ENCODE measurements at regions of chr7 and their contacts with region 1.

Region 1: GRCh38 chr7:33109005-33109757 is at the start of gene RP9:
- DNase-seq: peak; percentile 65 to 85 (median 77)
- ATAC-seq: peak; percentile 96
- H3K4me3 ChIP-seq: peak within 1 kb of the TSS; percentile 83
- H3K4me3 Mint-ChIP-seq: peak within 1 kb of the TSS; percentile 83 to 96 (median 90)
- H3K27ac ChIP-seq: peak within 1 kb of the TSS; percentile 86
- H3K27ac Mint-ChIP-seq: peak within 1 kb of the TSS; percentile 25 to 95 (median 77)
- H3K4me1 ChIP-seq: peaks cover 21 to 23% of the 10 kb centered on the region in 2 donors
- H3K4me1 Mint-ChIP-seq: peaks cover 25 to 52% (median 45%) of the 10 kb centered on the region in 7 donors
- H3K27me3 ChIP-seq: no peaks in the 10 kb centered on the region
- H3K27me3 Mint-ChIP-seq: peaks cover 5 to 32% (median 16%) of the 10 kb centered on the region in 5 donors
- total RNA-seq, gene RP9: 12.7 to 23.3 (median 14.7) TPM

Region 2: DNA sequence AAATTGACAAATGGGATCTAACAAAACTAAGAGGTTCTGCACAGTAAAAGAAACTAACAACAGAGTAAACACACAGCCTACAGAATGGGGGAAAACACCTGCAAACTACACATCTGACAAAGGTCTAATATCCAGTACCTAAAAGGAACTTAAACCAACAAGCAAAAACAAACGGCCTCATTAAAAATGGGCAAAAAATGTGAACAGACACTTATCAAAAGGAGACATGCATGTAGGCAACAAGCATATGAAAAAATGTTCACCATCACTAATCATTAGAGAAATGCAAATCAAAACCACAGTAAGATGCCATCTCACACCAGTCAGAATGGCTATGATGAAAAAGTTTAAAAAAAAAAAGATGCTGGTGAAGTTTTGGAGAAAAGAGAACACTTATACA is 415.0 kb before region 1 on chr7:
- CTCF ChIA-PET with region 1: no interaction called
- POLR2A ChIA-PET with region 1: no interaction called
- intact Hi-C with region 1: loop called in 1 of 2 experiments (anchors 5 kb)
- DNase-seq: no peak
- ATAC-seq: no peak
- H3K4me3 ChIP-seq: no peak overlapping the region
- H3K4me3 Mint-ChIP-seq: no peak overlapping the region
- H3K27ac ChIP-seq: no peak overlapping the region
- H3K27ac Mint-ChIP-seq: no peak overlapping the region
- H3K4me1 ChIP-seq: no peaks in the 10 kb centered on the region
- H3K4me1 Mint-ChIP-seq: peaks cover under 1 to 11% (median 6%) of the 10 kb centered on the region in 7 donors
- H3K27me3 ChIP-seq: no peaks in the 10 kb centered on the region
- H3K27me3 Mint-ChIP-seq: peaks cover 0 to 10% (median 0%) of the 10 kb centered on the region in 5 donors

Region 3: DNA sequence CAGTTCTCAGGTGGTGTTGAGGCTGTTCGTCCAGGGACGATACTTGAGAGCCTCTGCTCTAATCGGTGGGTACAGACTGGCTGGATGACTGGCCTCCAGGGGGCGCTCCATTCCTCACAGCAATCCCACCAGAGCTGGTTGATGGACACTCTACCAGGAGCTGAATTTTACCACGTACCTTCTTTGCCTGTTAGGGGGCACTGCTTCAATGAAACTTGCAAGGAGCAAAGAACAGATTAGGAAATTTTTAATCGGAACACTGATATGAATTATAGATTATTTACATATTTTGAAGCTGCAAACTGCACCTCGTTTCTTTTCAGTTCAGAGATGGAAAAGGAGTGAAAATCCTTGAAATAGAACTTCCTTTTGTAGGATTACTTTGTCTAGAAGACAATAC is 262.5 kb before region 1 on chr7:
- CTCF ChIA-PET with region 1: interaction called, 32 read pairs
- POLR2A ChIA-PET with region 1: no interaction called
- intact Hi-C with region 1: loop called (anchors 1 to 5 kb)
- DNase-seq: peak; percentile 77 to 89 (median 86)
- ATAC-seq: peak; percentile 100
- H3K4me3 ChIP-seq: no peak overlapping the region
- H3K4me3 Mint-ChIP-seq: peak overlapping the region in 6 of 10 donors; percentile 15 to 42 (median 30)
- H3K27ac ChIP-seq: no peak overlapping the region
- H3K27ac Mint-ChIP-seq: peak overlapping the region in 1 of 9 donors; percentile 33
- H3K4me1 ChIP-seq: peaks cover 7% of the 10 kb centered on the region in 2 donors
- H3K4me1 Mint-ChIP-seq: peaks cover 6 to 10% (median 9%) of the 10 kb centered on the region in 7 donors
- H3K27me3 ChIP-seq: peaks cover 0 to under 1% of the 10 kb centered on the region in 2 donors
- H3K27me3 Mint-ChIP-seq: peaks cover 12 to 44% (median 23%) of the 10 kb centered on the region in 5 donors

Region 4: GRCh38 chr7:32942786-32943653 is 166.2 kb before region 1 on chr7:
- CTCF ChIA-PET with region 1: interaction called, 4 read pairs
- POLR2A ChIA-PET with region 1: interaction called, 3 read pairs
- intact Hi-C with region 1: loop called (anchors 1 to 2 kb)
- DNase-seq: peak; percentile 41 to 80 (median 60)
- ATAC-seq: peak; percentile 94
- H3K4me3 ChIP-seq: peak overlapping the region; percentile 66
- H3K4me3 Mint-ChIP-seq: peak overlapping the region; percentile 61 to 97 (median 87)
- H3K27ac ChIP-seq: peak overlapping the region; percentile 47
- H3K27ac Mint-ChIP-seq: peak overlapping the region in 1 of 9 donors; percentile 58
- H3K4me1 ChIP-seq: peaks cover 0 to 13% of the 10 kb centered on the region in 2 donors
- H3K4me1 Mint-ChIP-seq: peaks cover 7 to 27% (median 11%) of the 10 kb centered on the region in 7 donors
- H3K27me3 ChIP-seq: no peaks in the 10 kb centered on the region
- H3K27me3 Mint-ChIP-seq: peaks cover 0 to 10% (median 0%) of the 10 kb centered on the region in 5 donors

Region 5: DNA sequence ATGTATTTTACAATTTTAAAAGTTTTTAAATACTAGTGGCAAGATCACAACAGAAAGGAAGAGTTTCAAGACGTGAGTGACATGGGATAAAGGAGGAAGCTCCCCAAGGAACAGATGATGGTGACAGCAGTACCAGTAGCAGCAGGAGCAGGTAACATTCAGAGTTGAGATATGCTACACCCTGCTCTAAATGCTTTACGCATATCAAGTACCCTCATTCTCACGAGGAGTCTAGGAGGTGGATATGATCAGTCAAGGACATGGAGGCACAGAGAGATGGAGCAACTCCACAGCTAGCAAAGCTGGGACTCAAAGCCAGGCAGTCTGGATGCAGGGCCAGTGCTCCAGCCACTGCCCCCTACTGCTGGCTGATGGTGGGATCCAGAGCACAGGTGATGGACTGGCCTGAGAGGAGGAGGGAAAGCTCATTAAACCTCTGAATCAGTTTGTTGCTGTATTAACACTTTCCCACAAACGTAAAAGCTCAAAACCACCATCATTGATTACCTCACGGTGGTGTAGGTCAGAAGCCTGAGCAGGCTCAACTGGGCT is 17.5 kb before region 1 on chr7:
- CTCF ChIA-PET with region 1: no interaction called
- POLR2A ChIA-PET with region 1: no interaction called
- intact Hi-C with region 1: loop called in 1 of 2 experiments (anchors 2 kb)
- DNase-seq: no peak
- ATAC-seq: no peak
- H3K4me3 ChIP-seq: no peak overlapping the region
- H3K4me3 Mint-ChIP-seq: no peak overlapping the region
- H3K27ac ChIP-seq: no peak overlapping the region
- H3K27ac Mint-ChIP-seq: no peak overlapping the region
- H3K4me1 ChIP-seq: no peaks in the 10 kb centered on the region
- H3K4me1 Mint-ChIP-seq: no peaks in the 10 kb centered on the region
- H3K27me3 ChIP-seq: no peaks in the 10 kb centered on the region
- H3K27me3 Mint-ChIP-seq: no peaks in the 10 kb centered on the region

Region 6: GRCh38 chr7:33157311-33157710 is 48.1 kb after region 1 on chr7:
- CTCF ChIA-PET with region 1: no interaction called
- POLR2A ChIA-PET with region 1: no interaction called
- intact Hi-C with region 1: no loop called
- DNase-seq: no peak
- ATAC-seq: no peak
- H3K4me3 ChIP-seq: no peak overlapping the region
- H3K4me3 Mint-ChIP-seq: no peak overlapping the region
- H3K27ac ChIP-seq: no peak overlapping the region
- H3K27ac Mint-ChIP-seq: no peak overlapping the region
- H3K4me1 ChIP-seq: no peaks in the 10 kb centered on the region
- H3K4me1 Mint-ChIP-seq: no peaks in the 10 kb centered on the region
- H3K27me3 ChIP-seq: no peaks in the 10 kb centered on the region
- H3K27me3 Mint-ChIP-seq: no peaks in the 10 kb centered on the region